B cell (primary cell): ENCODE measurements at regions of chr12 and their contacts with region 1.

Region 1: GRCh38 chr12:121590476-121591143 is 9.8 kb upstream of the KDM2B start:
- DNase-seq: peak; percentile 82
- ATAC-seq: peak; percentile 67
- H3K4me3 ChIP-seq: peak overlapping the region; percentile 15 to 61 (median 47)
- H3K4me3 Mint-ChIP-seq: peak overlapping the region; percentile 92
- H3K27ac ChIP-seq: peak overlapping the region; percentile 96 to 99
- H3K27ac Mint-ChIP-seq: peak overlapping the region; percentile 100
- H3K4me1 ChIP-seq: peaks cover 26 to 37% of the 10 kb centered on the region in 2 donors
- H3K4me1 Mint-ChIP-seq: peaks cover 34% of the 10 kb centered on the region
- H3K27me3 ChIP-seq: no peaks in the 10 kb centered on the region
- H3K27me3 Mint-ChIP-seq: no peaks in the 10 kb centered on the region
- CTCF ChIP-seq: no peak

Region 2: DNA sequence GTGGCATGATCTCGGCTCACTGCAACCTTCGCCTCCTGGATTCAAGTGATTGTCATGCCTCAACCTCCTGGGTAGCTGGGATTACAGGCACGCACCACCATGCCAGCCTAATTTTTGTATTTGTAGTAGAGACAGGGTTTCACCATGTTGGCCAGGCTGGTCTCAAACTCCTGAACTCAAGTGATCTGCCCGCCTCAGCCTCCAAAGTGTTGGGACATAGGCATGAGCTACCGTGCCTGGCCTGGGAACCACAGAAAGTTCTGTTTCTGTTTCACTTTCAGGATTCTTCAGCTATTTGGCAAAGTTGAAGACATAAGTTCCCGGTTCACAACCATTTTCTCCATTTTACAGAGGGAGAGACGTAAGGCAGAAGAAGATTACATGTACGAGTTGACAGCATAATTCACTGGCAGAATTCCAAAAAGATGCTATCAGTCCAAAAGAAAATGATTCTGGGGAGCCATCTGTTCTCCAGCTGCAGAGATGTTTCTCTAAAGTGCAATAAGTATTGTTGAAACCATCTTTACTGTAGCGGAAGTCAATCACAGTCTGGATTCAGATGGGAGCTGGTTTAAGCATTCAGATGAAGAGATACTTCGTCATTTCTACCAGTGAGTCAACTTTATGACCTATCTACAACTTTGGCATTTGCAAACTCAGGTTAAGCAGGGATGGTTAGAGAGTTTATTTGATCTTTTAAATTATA is 198.8 kb before region 1 on chr12:
- CTCF ChIA-PET with region 1: no interaction called
- POLR2A ChIA-PET with region 1: no interaction called
- intact Hi-C with region 1: no loop called
- DNase-seq: peak; percentile 44
- ATAC-seq: peak; percentile 31
- H3K4me3 ChIP-seq: peak overlapping the region in 1 of 5 experiments; percentile 44
- H3K4me3 Mint-ChIP-seq: peak overlapping the region; percentile 56
- H3K27ac ChIP-seq: no peak overlapping the region
- H3K27ac Mint-ChIP-seq: peak overlapping the region; percentile 6
- H3K4me1 ChIP-seq: peaks cover 3 to 7% of the 10 kb centered on the region in 2 donors
- H3K4me1 Mint-ChIP-seq: peaks cover 8% of the 10 kb centered on the region
- H3K27me3 ChIP-seq: no peaks in the 10 kb centered on the region
- H3K27me3 Mint-ChIP-seq: no peaks in the 10 kb centered on the region
- CTCF ChIP-seq: no peak

Region 3: GRCh38 chr12:121522971-121523370 is 67.6 kb before region 1 on chr12:
- CTCF ChIA-PET with region 1: no interaction called
- POLR2A ChIA-PET with region 1: no interaction called
- intact Hi-C with region 1: no loop called
- DNase-seq: peak; percentile 44
- ATAC-seq: peak; percentile 65
- H3K4me3 ChIP-seq: no peak overlapping the region
- H3K4me3 Mint-ChIP-seq: peak overlapping the region; percentile 86
- H3K27ac ChIP-seq: no peak overlapping the region
- H3K27ac Mint-ChIP-seq: peak overlapping the region; percentile 77
- H3K4me1 ChIP-seq: peaks cover 9 to 36% of the 10 kb centered on the region in 2 donors
- H3K4me1 Mint-ChIP-seq: peaks cover 37% of the 10 kb centered on the region
- H3K27me3 ChIP-seq: no peaks in the 10 kb centered on the region
- H3K27me3 Mint-ChIP-seq: no peaks in the 10 kb centered on the region
- CTCF ChIP-seq: no peak

Region 4: GRCh38 chr12:121560392-121561008 is 30.1 kb before region 1 on chr12:
- CTCF ChIA-PET with region 1: no interaction called
- POLR2A ChIA-PET with region 1: interaction called, 9 read pairs
- intact Hi-C with region 1: loop called (anchors 1 kb)
- DNase-seq: peak; percentile 90
- ATAC-seq: peak; percentile 78
- H3K4me3 ChIP-seq: no peak overlapping the region
- H3K4me3 Mint-ChIP-seq: peak overlapping the region; percentile 53
- H3K27ac ChIP-seq: peak overlapping the region; percentile 58
- H3K27ac Mint-ChIP-seq: peak overlapping the region; percentile 91
- H3K4me1 ChIP-seq: peaks cover 29 to 48% of the 10 kb centered on the region in 2 donors
- H3K4me1 Mint-ChIP-seq: peaks cover 40% of the 10 kb centered on the region
- H3K27me3 ChIP-seq: no peaks in the 10 kb centered on the region
- H3K27me3 Mint-ChIP-seq: no peaks in the 10 kb centered on the region
- CTCF ChIP-seq: no peak

Region 5: DNA sequence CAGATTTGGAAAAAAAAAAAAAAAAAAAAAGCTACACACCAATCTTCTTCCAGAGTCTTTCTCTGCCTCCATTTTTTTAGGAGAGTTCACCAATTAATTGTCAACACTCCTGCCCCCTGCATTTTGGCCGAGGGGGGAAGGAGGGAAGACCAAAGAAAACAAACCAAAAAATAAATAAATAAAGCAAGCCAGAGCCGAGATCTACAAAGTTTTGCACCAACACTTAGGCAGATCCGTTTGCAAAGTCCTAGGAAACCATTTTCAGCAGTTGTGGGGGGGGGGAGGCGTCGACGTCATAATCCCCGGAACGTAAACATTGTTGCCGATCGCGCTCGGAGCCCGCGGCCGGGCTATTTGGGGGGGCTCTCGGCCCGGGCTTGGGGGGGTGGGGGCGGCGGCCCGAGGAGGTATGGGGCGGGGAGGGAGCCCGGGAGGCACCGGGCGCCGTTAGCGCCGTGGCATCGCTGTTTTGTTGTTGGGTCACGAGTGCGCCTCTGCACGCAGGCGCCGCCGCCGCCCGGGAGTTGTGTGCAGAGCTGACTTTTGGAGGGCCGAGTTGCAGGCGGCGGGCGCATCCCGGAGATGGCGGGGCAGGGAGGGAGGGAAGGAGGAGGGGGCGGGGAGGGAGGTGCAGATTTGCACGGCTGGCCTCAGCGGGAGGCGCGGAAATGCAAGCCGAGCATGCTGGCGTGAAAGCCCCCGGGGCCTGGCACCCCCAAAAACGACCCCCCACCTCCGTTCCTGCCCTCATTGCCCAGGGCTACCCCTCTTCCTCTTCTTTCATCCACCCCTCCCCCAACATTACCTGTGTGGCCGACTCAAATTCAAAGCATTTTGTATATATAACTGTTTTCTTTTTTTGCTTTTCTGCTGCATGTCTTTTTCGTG is 10.4 kb before region 1 on chr12:
- CTCF ChIA-PET with region 1: interaction called, 13 read pairs
- POLR2A ChIA-PET with region 1: interaction called, 74 read pairs
- intact Hi-C with region 1: loop called (anchors 1 kb)
- DNase-seq: peak; percentile 79
- ATAC-seq: peak; percentile 55
- H3K4me3 ChIP-seq: peak overlapping the region; percentile 57 to 93 (median 65)
- H3K4me3 Mint-ChIP-seq: peak overlapping the region; percentile 94
- H3K27ac ChIP-seq: peak overlapping the region; percentile 69 to 77
- H3K27ac Mint-ChIP-seq: peak overlapping the region; percentile 94
- H3K4me1 ChIP-seq: peaks cover 23 to 47% of the 10 kb centered on the region in 2 donors
- H3K4me1 Mint-ChIP-seq: peaks cover 34% of the 10 kb centered on the region
- H3K27me3 ChIP-seq: no peaks in the 10 kb centered on the region
- H3K27me3 Mint-ChIP-seq: no peaks in the 10 kb centered on the region
- CTCF ChIP-seq: no peak

Region 6: DNA sequence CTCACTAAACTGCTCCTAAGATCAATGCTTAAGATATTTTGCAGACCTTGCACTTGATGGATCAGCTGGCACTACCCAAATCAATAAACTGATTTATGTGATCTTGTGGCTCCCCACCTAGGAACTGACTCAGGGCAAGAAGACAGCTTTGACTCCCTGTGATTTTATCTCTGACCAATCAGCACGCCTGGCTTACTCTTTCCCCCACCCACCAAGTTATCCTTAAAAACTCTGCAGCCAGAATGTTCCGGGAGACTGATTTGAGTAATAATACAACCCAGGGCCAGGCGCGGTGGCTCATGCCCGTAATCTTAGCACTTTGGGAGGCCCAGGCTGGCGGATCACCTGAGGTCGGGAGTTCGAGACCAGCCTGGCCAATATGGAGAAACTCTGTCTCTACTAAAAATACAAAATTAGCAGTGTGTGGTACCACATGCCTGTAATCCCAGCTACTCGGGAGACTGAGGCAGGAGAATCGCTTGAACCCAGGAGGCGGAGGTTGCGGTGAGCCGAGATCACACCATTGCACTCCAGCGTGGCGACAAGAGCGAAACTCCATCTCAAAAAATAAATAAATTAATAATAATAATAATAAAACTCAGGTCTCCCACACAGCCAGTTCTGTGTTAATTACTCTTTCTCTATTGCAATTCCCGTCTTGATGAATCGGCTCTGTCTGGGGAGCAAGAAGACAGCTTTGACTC is 66.8 kb after region 1 on chr12:
- CTCF ChIA-PET with region 1: no interaction called
- POLR2A ChIA-PET with region 1: no interaction called
- intact Hi-C with region 1: no loop called
- DNase-seq: no peak
- ATAC-seq: no peak
- H3K4me3 ChIP-seq: no peak overlapping the region
- H3K4me3 Mint-ChIP-seq: peak overlapping the region; percentile 73
- H3K27ac ChIP-seq: no peak overlapping the region
- H3K27ac Mint-ChIP-seq: peak overlapping the region; percentile 76
- H3K4me1 ChIP-seq: peaks cover 16 to 19% of the 10 kb centered on the region in 2 donors
- H3K4me1 Mint-ChIP-seq: peaks cover 28% of the 10 kb centered on the region
- H3K27me3 ChIP-seq: no peaks in the 10 kb centered on the region
- H3K27me3 Mint-ChIP-seq: no peaks in the 10 kb centered on the region
- CTCF ChIP-seq: no peak

Region 7: DNA sequence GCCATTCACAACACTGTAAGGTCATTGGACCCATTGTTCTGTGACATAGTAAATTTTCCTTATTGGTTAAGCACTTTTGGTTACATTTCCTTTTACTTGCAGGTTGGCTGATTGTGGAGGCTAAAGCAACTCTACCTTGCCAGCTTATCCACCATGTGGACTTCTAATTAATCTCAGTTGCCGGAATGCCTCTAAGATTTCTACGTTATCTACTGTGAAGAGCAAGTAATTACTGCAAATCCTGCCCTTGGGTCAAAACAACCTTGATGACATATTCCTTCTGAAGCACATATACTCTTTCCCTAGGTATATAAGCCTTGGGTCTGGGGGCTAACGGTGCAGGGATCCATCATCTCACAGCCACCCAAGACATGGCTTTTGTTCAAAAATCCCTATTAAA is 98.4 kb after region 1 on chr12:
- CTCF ChIA-PET with region 1: no interaction called
- POLR2A ChIA-PET with region 1: no interaction called
- intact Hi-C with region 1: loop called (anchors 1 kb)
- DNase-seq: no peak
- ATAC-seq: no peak
- H3K4me3 ChIP-seq: no peak overlapping the region
- H3K4me3 Mint-ChIP-seq: no peak overlapping the region
- H3K27ac ChIP-seq: no peak overlapping the region
- H3K27ac Mint-ChIP-seq: peak overlapping the region; percentile 10
- H3K4me1 ChIP-seq: peaks cover 4 to 16% of the 10 kb centered on the region in 2 donors
- H3K4me1 Mint-ChIP-seq: peaks cover 8% of the 10 kb centered on the region
- H3K27me3 ChIP-seq: no peaks in the 10 kb centered on the region
- H3K27me3 Mint-ChIP-seq: no peaks in the 10 kb centered on the region
- CTCF ChIP-seq: no peak

Region 8: GRCh38 chr12:121802846-121803630 is 212.4 kb after region 1 on chr12:
- CTCF ChIA-PET with region 1: no interaction called
- POLR2A ChIA-PET with region 1: interaction called, 3 read pairs
- intact Hi-C with region 1: loop called (anchors 2 kb)
- DNase-seq: peak; percentile 98
- ATAC-seq: peak; percentile 51
- H3K4me3 ChIP-seq: peak overlapping the region; percentile 79 to 95 (median 89)
- H3K4me3 Mint-ChIP-seq: peak overlapping the region; percentile 90
- H3K27ac ChIP-seq: peak overlapping the region; percentile 97
- H3K27ac Mint-ChIP-seq: peak overlapping the region; percentile 98
- H3K4me1 ChIP-seq: peaks cover 33 to 53% of the 10 kb centered on the region in 2 donors
- H3K4me1 Mint-ChIP-seq: peaks cover 50% of the 10 kb centered on the region
- H3K27me3 ChIP-seq: no peaks in the 10 kb centered on the region
- H3K27me3 Mint-ChIP-seq: no peaks in the 10 kb centered on the region
- CTCF ChIP-seq: no peak

Region 9: GRCh38 chr12:122803937-122804336 is 1213.3 kb after region 1 on chr12:
- CTCF ChIA-PET with region 1: no interaction called
- POLR2A ChIA-PET with region 1: no interaction called
- intact Hi-C with region 1: no loop called
- DNase-seq: no peak
- ATAC-seq: no peak
- H3K4me3 ChIP-seq: no peak overlapping the region
- H3K4me3 Mint-ChIP-seq: no peak overlapping the region
- H3K27ac ChIP-seq: no peak overlapping the region
- H3K27ac Mint-ChIP-seq: no peak overlapping the region
- H3K4me1 ChIP-seq: peaks cover 7% of the 10 kb centered on the region in 2 donors
- H3K4me1 Mint-ChIP-seq: peaks cover 8% of the 10 kb centered on the region
- H3K27me3 ChIP-seq: no peaks in the 10 kb centered on the region
- H3K27me3 Mint-ChIP-seq: no peaks in the 10 kb centered on the region
- CTCF ChIP-seq: no peak